CD8-positive, alpha-beta T cell (primary cell): ENCODE measurements at regions of chr2 and their contacts with region 1.

Region 1: DNA sequence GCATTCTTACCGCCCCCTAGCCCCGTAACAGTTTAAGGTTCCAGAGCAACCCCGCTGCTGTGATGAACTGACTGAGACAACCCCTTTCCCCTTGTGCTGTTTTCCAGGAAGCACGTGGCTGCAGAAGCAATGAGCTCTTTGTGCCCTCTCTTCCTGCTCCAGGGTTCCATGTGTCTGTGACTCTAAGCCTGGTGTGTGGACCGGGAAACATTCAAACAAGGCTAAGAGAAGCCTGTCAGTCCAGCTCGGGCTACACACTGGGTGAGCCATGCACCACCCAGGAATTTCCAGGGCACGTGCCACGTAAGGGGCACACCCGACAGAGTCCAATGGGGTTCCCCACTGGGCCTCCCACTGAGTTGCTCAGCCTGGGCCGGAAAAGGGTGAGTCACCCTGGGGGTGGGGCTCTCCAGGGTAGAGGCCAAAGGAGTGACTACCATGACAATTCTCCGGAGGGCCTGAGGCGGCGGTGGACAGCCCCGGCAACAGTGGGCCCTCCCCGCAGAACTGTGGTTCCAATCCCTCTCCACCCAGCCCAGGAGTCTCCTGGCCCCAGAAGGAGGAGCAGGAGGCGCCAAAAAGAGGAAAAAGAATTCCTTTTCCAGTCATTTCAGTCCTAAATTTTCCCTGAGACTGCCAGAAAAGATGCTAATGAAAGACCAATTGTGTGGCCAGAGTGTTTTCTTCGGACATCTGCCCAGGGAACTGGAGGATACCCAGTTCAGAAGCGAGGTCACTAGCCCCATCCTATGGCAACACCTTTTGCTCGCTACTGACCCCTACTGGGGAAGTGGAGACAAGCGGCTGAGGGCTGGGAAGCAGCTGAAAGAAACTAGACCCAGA is 157.8 kb upstream of the SLC1A4 start:
- DNase-seq: peak; percentile 67 to 91 (median 83)
- ATAC-seq: peak; percentile 88
- H3K4me3 ChIP-seq: peak overlapping the region in 1 of 2 experiments; percentile 32
- H3K4me3 Mint-ChIP-seq: peak overlapping the region; percentile 46
- H3K27ac ChIP-seq: peak overlapping the region in 1 of 2 experiments; percentile 4
- H3K27ac Mint-ChIP-seq: no peak overlapping the region
- H3K4me1 ChIP-seq: peaks cover 10% of the 10 kb centered on the region
- H3K4me1 Mint-ChIP-seq: peaks cover 11% of the 10 kb centered on the region
- H3K27me3 ChIP-seq: peaks cover 0 to 5% of the 10 kb centered on the region in 2 experiments
- H3K27me3 Mint-ChIP-seq: peaks cover 3% of the 10 kb centered on the region
- CTCF ChIP-seq: peak; percentile 94

Region 2: GRCh38 chr2:64586883-64587481 is 244.4 kb before region 1 on chr2:
- CTCF ChIA-PET with region 1: interaction called, 10 read pairs
- POLR2A ChIA-PET with region 1: no interaction called
- intact Hi-C with region 1: loop called (anchors 1 kb)
- DNase-seq: peak in 2 of 9 experiments; percentile 57 to 70
- ATAC-seq: peak; percentile 75
- H3K4me3 ChIP-seq: no peak overlapping the region
- H3K4me3 Mint-ChIP-seq: no peak overlapping the region
- H3K27ac ChIP-seq: no peak overlapping the region
- H3K27ac Mint-ChIP-seq: no peak overlapping the region
- H3K4me1 ChIP-seq: no peaks in the 10 kb centered on the region
- H3K4me1 Mint-ChIP-seq: no peaks in the 10 kb centered on the region
- H3K27me3 ChIP-seq: no peaks in the 10 kb centered on the region
- H3K27me3 Mint-ChIP-seq: no peaks in the 10 kb centered on the region
- CTCF ChIP-seq: peak; percentile 87

Region 3: GRCh38 chr2:64730551-64731262 is 100.6 kb before region 1 on chr2:
- CTCF ChIA-PET with region 1: interaction called, 13 read pairs
- POLR2A ChIA-PET with region 1: no interaction called
- intact Hi-C with region 1: no loop called
- DNase-seq: peak in 8 of 9 experiments; percentile 29 to 83 (median 58)
- ATAC-seq: peak; percentile 75
- H3K4me3 ChIP-seq: peak overlapping the region; percentile 32 to 51
- H3K4me3 Mint-ChIP-seq: peak overlapping the region; percentile 87
- H3K27ac ChIP-seq: peak overlapping the region; percentile 69 to 78
- H3K27ac Mint-ChIP-seq: peak overlapping the region; percentile 99
- H3K4me1 ChIP-seq: peaks cover 43% of the 10 kb centered on the region
- H3K4me1 Mint-ChIP-seq: peaks cover 61% of the 10 kb centered on the region
- H3K27me3 ChIP-seq: no peaks in the 10 kb centered on the region
- H3K27me3 Mint-ChIP-seq: no peaks in the 10 kb centered on the region
- CTCF ChIP-seq: no peak

Region 4: DNA sequence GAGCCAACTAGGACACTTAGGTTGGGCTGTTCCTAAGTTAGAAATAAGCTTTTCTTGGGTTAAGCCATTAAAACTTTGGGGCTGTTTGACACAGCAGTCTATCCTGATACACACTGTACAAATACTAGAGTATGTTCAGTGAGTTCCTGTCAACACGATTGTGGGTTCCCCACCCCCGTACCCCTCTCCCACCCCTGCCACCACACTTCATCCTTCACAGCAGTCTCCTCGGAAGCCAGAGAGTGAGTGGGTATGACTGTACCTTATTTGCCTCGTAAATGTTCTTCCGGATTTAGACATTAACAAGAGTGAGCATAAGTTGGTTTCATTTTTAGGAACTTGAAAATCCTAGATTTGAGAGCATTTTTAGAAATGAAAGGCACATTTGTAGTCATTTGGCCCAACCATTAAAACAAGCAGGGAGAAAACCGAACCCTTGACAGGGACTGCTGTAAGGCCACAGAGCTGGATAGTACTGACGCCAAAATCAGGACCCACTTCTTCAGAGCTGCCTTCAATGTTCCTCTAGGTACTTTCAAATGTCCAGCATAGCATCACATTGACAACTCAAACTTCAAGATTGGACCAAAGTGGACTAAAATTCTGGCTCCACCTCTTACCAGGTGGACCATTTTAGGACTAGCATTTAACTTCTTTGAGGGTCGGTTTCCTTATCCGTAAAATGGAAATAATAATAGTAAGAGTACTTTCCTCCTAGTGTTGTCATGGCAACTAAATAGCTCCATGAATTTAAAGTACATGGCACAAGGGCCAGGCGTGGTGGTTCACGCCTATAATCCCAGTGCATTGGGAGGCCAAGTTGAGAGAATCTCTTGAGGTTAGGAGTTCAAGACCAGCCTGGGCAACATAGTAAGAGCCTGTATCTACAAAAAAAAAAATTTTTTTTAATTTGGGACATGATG is 11.3 kb before region 1 on chr2:
- CTCF ChIA-PET with region 1: interaction called, 24 read pairs
- POLR2A ChIA-PET with region 1: interaction called, 3 read pairs
- intact Hi-C with region 1: loop called in 1 of 2 experiments (anchors 1 kb)
- DNase-seq: peak in 8 of 9 experiments; percentile 39 to 82 (median 56)
- ATAC-seq: peak; percentile 98
- H3K4me3 ChIP-seq: peak overlapping the region; percentile 12 to 36
- H3K4me3 Mint-ChIP-seq: peak overlapping the region; percentile 73
- H3K27ac ChIP-seq: peak overlapping the region; percentile 60 to 72
- H3K27ac Mint-ChIP-seq: peak overlapping the region; percentile 93
- H3K4me1 ChIP-seq: peaks cover 28% of the 10 kb centered on the region
- H3K4me1 Mint-ChIP-seq: peaks cover 40% of the 10 kb centered on the region
- H3K27me3 ChIP-seq: no peaks in the 10 kb centered on the region
- H3K27me3 Mint-ChIP-seq: no peaks in the 10 kb centered on the region
- CTCF ChIP-seq: no peak

Region 5: DNA sequence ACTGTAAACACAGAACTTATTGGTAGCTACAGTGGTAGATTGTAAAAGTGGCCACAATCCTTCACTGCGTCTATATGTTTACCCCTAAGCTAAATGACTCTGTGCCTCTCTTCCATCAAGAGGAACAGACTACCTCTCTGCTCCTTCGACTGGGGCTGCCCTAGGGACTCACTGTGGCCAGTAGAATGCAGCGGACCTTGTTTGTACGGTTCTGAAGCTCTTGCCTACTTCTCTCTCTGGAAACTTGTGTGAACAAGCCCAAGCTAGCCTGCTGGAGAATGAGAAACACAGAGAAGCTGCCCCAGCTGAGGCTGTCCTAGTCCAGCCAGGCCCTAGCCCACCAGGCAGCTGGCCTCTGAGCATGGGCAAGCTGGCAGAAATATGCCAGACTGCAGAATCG is 17.0 kb after region 1 on chr2:
- CTCF ChIA-PET with region 1: interaction called, 12 read pairs
- POLR2A ChIA-PET with region 1: no interaction called
- intact Hi-C with region 1: no loop called
- DNase-seq: no peak
- ATAC-seq: no peak
- H3K4me3 ChIP-seq: no peak overlapping the region
- H3K4me3 Mint-ChIP-seq: no peak overlapping the region
- H3K27ac ChIP-seq: no peak overlapping the region
- H3K27ac Mint-ChIP-seq: no peak overlapping the region
- H3K4me1 ChIP-seq: no peaks in the 10 kb centered on the region
- H3K4me1 Mint-ChIP-seq: no peaks in the 10 kb centered on the region
- H3K27me3 ChIP-seq: no peaks in the 10 kb centered on the region
- H3K27me3 Mint-ChIP-seq: peaks cover 2% of the 10 kb centered on the region
- CTCF ChIP-seq: no peak

Region 6: DNA sequence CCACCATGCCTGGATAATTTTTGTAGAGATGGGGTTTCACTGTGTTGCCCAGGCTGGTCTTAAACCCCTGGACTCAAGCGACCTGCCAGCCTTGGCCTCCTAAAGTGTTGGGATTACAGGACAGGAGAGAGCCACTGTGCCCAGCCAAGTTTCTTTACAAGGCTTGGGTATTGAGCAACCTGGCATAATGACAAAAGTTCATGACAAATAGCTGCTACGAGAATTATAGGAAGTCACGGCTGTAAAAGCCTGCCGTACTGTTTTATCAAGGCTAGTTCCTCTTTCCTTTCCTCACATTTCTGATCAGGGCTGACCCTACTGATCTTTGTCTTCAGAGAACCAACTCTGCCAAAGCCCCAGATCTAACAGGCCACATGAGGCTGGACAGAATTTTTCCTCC is 1091.4 kb after region 1 on chr2:
- CTCF ChIA-PET with region 1: no interaction called
- POLR2A ChIA-PET with region 1: no interaction called
- intact Hi-C with region 1: no loop called
- DNase-seq: no peak
- ATAC-seq: no peak
- H3K4me3 ChIP-seq: no peak overlapping the region
- H3K4me3 Mint-ChIP-seq: no peak overlapping the region
- H3K27ac ChIP-seq: no peak overlapping the region
- H3K27ac Mint-ChIP-seq: no peak overlapping the region
- H3K4me1 ChIP-seq: no peaks in the 10 kb centered on the region
- H3K4me1 Mint-ChIP-seq: no peaks in the 10 kb centered on the region
- H3K27me3 ChIP-seq: no peaks in the 10 kb centered on the region
- H3K27me3 Mint-ChIP-seq: no peaks in the 10 kb centered on the region
- CTCF ChIP-seq: no peak